Sigmoid colon (tissue), 7 donors: ENCODE measurements at regions of chr7 and their contacts with region 1.

Region 1: DNA sequence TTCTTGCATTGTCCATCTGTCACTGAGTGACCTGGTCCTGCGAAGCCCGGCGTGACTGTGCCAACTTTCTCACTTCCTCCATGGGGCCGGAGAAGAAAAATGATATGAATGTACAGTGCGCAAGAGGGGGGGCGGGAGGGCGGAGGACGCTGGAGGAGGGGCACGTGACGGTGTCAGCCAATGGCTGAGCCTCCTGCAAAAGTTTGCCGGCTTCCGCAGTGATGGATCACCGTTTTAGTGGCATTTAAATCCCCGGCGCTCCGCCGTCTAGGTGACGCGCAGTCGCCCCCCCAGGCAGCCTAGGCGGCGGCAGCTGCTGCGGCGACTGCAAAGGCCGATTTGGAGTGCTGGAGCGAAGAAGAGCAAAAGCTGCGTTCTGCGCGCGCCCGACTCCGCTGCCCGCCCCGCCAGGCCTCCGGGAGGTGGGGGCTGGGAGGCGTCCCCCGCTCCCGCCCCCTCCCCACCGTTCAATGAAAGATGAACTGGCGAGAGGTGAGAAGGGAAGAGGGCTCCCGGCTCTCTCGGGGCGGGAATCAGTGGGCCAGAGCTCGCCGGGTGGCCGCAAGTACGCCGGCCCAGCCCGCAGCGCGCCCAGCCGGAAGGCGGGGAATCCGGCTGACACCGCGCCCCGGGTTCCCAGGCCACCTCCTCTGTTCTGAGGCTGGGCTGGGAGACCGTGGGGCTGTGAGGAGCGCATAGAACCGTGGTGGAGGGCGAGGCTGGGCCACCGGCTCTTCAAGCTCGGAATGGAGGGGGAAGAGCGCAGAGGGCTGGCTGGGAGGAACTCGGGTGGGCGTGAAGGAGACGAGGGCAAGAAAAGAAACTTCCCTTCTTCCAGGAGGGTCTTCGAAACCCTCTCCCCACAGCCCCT is at the start of gene HOXA1:
- DNase-seq: peak; percentile 93
- H3K4me3 ChIP-seq: peak within 1 kb of the TSS; percentile 77 to 93 (median 90)
- H3K27ac ChIP-seq: peak within 1 kb of the TSS; percentile 93 to 99 (median 94)
- H3K4me1 ChIP-seq: peaks cover 0 to 45% (median 25%) of the 10 kb centered on the region in 4 donors
- H3K27me3 ChIP-seq: no peaks in the 10 kb centered on the region
- CTCF ChIP-seq: no peak
- EP300 ChIP-seq: no peak
- POLR2A ChIP-seq: peak; percentile 43 to 71
- total RNA-seq, gene HOXA1: 0.14 to 1.1 (median 0.95) TPM

Region 2: DNA sequence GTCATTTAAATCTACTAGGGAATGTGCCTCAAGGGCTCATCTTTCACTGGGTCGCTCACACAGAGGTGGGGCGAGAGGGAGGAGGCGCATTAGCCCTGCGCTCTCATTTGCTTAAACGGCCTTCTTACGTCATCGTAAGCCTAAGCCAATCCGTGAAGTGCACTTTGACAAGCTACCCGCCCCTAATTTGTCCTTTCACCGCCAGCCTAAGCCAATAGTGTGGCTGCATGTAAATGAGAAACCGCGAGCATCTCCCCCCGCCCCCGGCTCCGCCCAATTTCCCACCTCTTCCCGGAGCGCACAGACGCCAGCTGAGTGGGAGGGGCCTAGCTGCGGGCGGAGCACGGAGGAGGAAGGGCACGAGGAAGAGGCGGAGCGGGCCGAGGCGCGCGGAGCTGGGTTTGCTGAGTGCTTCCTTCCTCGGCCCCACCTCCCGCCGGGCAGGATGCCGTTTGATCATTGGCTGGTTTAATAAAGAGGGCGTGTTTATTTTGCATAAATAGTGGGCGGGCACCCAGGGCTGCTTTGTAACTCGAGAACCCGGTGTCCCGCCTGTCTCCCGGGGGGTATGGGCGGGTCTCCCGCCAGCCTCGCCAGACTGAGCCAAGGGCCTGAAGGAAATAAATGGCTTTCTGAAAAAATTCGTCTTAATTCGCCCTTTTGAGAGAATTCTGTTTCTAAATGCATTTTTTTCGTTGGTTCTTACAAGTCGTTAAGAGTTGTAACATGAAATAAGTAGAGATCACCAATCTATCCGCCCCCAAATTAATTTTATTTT is 1233.7 kb before region 1 on chr7:
- intact Hi-C with region 1: loop called (anchors 10 kb)
- DNase-seq: peak; percentile 95
- H3K4me3 ChIP-seq: peak overlapping the region in 1 of 4 donors; percentile 10
- H3K27ac ChIP-seq: peak overlapping the region in 1 of 4 donors; percentile 51
- H3K4me1 ChIP-seq: peaks cover 0 to 15% (median 3%) of the 10 kb centered on the region in 4 donors
- H3K27me3 ChIP-seq: peaks cover 24 to 100% (median 99%) of the 10 kb centered on the region in 3 donors
- CTCF ChIP-seq: no peak
- EP300 ChIP-seq: no peak
- POLR2A ChIP-seq: no peak

Region 3: GRCh38 chr7:26686448-26686981 is 409.6 kb before region 1 on chr7:
- intact Hi-C with region 1: loop called (anchors 5 kb)
- DNase-seq: peak; percentile 66
- H3K4me3 ChIP-seq: no peak overlapping the region
- H3K27ac ChIP-seq: peak overlapping the region in 3 of 4 donors; percentile 22 to 45 (median 39)
- H3K4me1 ChIP-seq: peaks cover 0 to 13% (median 0%) of the 10 kb centered on the region in 4 donors
- H3K27me3 ChIP-seq: no peaks in the 10 kb centered on the region
- CTCF ChIP-seq: peak; percentile 35 to 73 (median 57)
- EP300 ChIP-seq: no peak
- POLR2A ChIP-seq: no peak

Region 4: GRCh38 chr7:26864309-26865093 is 231.6 kb before region 1 on chr7 and contains the start of gene SKAP2:
- intact Hi-C with region 1: loop called (anchors 2 kb)
- DNase-seq: peak; percentile 100
- H3K4me3 ChIP-seq: peak within 1 kb of the TSS; percentile 72 to 91 (median 82)
- H3K27ac ChIP-seq: peak within 1 kb of the TSS; percentile 89 to 98 (median 94)
- H3K4me1 ChIP-seq: no peaks in the 10 kb centered on the region
- H3K27me3 ChIP-seq: no peaks in the 10 kb centered on the region
- CTCF ChIP-seq: no peak
- EP300 ChIP-seq: peak in 1 of 4 donors; percentile 67
- POLR2A ChIP-seq: peak; percentile 91 to 92
- total RNA-seq, gene SKAP2: 13.0 to 19.3 (median 16.8) TPM

Region 5: GRCh38 chr7:27130540-27131389 is 34.6 kb after region 1 on chr7 and contains the start of gene HOXA4:
- intact Hi-C with region 1: loop called (anchors 2 kb)
- DNase-seq: peak; percentile 98
- H3K4me3 ChIP-seq: peak within 1 kb of the TSS; percentile 65 to 88 (median 80)
- H3K27ac ChIP-seq: peak within 1 kb of the TSS; percentile 91 to 99 (median 94)
- H3K4me1 ChIP-seq: peaks cover 0 to 84% (median 64%) of the 10 kb centered on the region in 4 donors
- H3K27me3 ChIP-seq: no peaks in the 10 kb centered on the region
- CTCF ChIP-seq: no peak
- EP300 ChIP-seq: peak in 1 of 4 donors; percentile 18
- POLR2A ChIP-seq: peak; percentile 61 to 72
- total RNA-seq, gene HOXA4: 2.0 to 4.2 (median 2.9) TPM